Psoas muscle (tissue), 8 donors: ENCODE measurements at regions of chr6 and their contacts with region 1.

Region 1: DNA sequence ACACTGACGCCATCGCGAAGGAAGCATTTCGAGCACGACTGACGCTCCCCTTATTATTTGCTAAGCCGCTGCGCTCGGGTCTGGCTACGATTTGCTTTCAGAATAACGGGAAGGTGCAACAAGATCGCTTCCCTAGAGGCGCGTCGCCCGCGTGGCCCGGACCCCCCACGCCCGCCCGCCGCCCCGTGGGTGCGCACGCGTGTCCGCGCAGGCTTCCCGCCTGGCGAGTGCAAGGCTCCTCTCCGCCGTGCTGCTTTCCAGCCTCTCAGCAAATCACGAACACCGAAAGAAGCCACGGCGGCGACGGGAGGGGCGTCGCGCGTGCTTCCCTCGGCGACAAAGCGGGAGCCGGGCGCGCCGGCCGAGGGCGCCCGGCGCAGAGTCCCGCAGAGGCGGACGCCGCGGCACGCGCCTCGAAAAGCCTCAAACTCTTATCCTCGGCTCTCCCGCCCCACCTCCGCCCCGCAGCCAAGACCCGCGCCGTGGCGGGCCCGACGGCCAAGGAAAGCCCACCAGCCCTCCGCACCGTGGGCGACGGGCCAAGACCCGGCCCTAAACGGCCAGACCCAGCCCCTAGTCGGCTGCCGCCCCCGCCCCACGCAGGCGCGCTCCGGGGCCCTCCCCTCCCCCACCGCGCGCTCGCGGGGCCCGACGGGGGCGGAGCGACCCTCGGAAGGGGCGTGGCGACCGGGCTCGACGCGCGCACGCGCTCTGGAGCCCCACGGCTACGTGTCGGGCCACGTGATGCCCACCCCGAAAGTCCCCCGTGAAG is 987 bp upstream of the QKI start:
- DNase-seq: peak; percentile 90 to 95
- ATAC-seq: peak; percentile 85 to 92 (median 89)
- H3K4me3 ChIP-seq: peak overlapping the region; percentile 73
- H3K27ac ChIP-seq: peak overlapping the region; percentile 98
- H3K4me1 ChIP-seq: peaks cover 1% of the 10 kb centered on the region
- H3K27me3 ChIP-seq: no peaks in the 10 kb centered on the region
- CTCF ChIP-seq: no peak

Region 2: GRCh38 chr6:162856885-162857284 is 556.6 kb before region 1 on chr6:
- intact Hi-C with region 1: loop called in 1 of 2 experiments (anchors 5 kb)
- DNase-seq: no peak
- ATAC-seq: peak; percentile 80 to 95 (median 92)
- H3K4me3 ChIP-seq: peak overlapping the region; percentile 61
- H3K27ac ChIP-seq: peak overlapping the region; percentile 72
- H3K4me1 ChIP-seq: no peaks in the 10 kb centered on the region
- H3K27me3 ChIP-seq: no peaks in the 10 kb centered on the region
- CTCF ChIP-seq: peak; percentile 52

Region 3: GRCh38 chr6:162899148-162899547 is 514.4 kb before region 1 on chr6:
- intact Hi-C with region 1: no loop called
- DNase-seq: no peak
- ATAC-seq: peak; percentile 59 to 86 (median 68)
- H3K4me3 ChIP-seq: no peak overlapping the region
- H3K27ac ChIP-seq: no peak overlapping the region
- H3K4me1 ChIP-seq: no peaks in the 10 kb centered on the region
- H3K27me3 ChIP-seq: peaks cover 0 to under 1% (median 0%) of the 10 kb centered on the region in 3 donors
- CTCF ChIP-seq: no peak

Region 4: DNA sequence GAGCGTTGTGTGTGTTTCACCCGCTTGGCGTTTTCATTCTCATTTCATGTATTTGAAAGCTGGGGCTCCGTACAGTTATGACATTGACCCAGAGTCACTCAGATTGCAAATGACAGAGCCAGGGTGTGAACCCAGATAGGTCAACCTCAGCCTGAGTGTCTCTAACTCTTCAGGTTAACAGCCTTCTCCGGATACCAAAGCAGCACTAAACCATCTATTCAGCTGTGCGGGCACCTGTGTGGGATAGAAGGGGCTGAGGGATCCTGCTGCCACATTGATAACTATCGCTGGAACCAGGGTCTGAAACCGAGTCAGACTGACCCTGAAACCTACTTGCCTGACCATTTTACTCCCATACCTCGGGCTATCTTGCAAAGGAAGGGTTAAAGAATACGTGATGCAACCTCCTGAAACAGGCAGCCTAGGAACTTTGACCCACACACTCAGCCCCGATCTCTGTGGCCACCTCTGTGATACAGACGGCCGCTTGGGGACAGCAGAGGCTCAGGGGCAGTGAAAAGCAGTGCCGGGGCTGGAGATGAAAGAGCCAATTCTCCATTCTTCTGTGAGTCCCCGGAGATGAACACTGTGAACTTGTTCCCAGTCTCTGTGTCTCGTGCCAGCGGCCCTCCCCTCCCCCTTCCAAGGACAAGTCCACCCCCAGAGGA is 232.5 kb before region 1 on chr6:
- intact Hi-C with region 1: loop called (anchors 2 to 5 kb)
- DNase-seq: peak; percentile 75 to 90
- ATAC-seq: peak; percentile 93 to 96 (median 94)
- H3K4me3 ChIP-seq: peak overlapping the region; percentile 54
- H3K27ac ChIP-seq: peak overlapping the region; percentile 48
- H3K4me1 ChIP-seq: peaks cover 27% of the 10 kb centered on the region
- H3K27me3 ChIP-seq: no peaks in the 10 kb centered on the region
- CTCF ChIP-seq: peak; percentile 89

Region 5: GRCh38 chr6:163191704-163192537 is 221.6 kb before region 1 on chr6:
- intact Hi-C with region 1: no loop called
- DNase-seq: no peak
- ATAC-seq: peak; percentile 26 to 57 (median 40)
- H3K4me3 ChIP-seq: no peak overlapping the region
- H3K27ac ChIP-seq: no peak overlapping the region
- H3K4me1 ChIP-seq: peaks cover 6% of the 10 kb centered on the region
- H3K27me3 ChIP-seq: no peaks in the 10 kb centered on the region
- CTCF ChIP-seq: no peak

Region 6: DNA sequence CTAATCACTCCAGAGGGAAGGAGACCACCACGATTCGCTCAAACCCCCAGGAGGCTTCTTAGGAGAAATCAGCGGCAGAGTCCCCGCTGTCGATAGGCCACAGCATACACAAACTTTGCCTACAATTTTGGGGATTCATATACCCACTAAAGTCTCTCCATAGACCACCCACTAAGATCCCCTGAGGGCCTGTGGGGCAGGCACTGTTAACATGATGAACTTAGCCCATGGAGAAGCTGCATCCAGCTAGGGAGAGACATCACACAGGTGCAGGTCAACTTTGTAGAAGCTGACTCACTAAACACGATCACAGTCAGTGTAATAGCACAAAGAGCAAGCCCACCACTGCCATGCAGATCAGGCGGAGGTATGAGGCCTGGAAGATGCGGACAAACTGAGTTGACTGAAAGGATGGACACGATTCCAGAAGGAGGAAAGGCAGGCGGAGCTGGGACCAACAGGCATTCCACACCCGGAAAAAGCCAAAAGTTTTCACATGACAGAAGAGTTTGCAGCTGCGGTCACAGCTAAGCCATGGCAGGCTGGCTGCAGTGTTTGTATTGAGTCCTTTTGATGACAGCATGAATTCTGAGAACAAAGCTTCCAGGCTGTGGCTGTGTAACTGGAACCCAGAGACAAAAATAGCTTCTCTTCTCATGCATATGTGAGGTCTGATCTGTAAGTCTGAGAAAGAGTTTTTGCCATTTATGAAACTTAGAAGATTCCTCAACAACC is 74.7 kb before region 1 on chr6:
- intact Hi-C with region 1: loop called (anchors 2 to 5 kb)
- DNase-seq: peak; percentile 56 to 78
- ATAC-seq: peak; percentile 79 to 83 (median 80)
- H3K4me3 ChIP-seq: peak overlapping the region; percentile 50
- H3K27ac ChIP-seq: peak overlapping the region; percentile 94
- H3K4me1 ChIP-seq: peaks cover 72% of the 10 kb centered on the region
- H3K27me3 ChIP-seq: no peaks in the 10 kb centered on the region
- CTCF ChIP-seq: no peak

Region 7: GRCh38 chr6:163460307-163460782 is 46.8 kb after region 1 on chr6:
- intact Hi-C with region 1: no loop called
- DNase-seq: no peak
- ATAC-seq: peak in 1 of 4 donors; percentile 6
- H3K4me3 ChIP-seq: peak overlapping the region; percentile 62
- H3K27ac ChIP-seq: peak overlapping the region; percentile 73
- H3K4me1 ChIP-seq: peaks cover 82% of the 10 kb centered on the region
- H3K27me3 ChIP-seq: no peaks in the 10 kb centered on the region
- CTCF ChIP-seq: no peak

Region 8: DNA sequence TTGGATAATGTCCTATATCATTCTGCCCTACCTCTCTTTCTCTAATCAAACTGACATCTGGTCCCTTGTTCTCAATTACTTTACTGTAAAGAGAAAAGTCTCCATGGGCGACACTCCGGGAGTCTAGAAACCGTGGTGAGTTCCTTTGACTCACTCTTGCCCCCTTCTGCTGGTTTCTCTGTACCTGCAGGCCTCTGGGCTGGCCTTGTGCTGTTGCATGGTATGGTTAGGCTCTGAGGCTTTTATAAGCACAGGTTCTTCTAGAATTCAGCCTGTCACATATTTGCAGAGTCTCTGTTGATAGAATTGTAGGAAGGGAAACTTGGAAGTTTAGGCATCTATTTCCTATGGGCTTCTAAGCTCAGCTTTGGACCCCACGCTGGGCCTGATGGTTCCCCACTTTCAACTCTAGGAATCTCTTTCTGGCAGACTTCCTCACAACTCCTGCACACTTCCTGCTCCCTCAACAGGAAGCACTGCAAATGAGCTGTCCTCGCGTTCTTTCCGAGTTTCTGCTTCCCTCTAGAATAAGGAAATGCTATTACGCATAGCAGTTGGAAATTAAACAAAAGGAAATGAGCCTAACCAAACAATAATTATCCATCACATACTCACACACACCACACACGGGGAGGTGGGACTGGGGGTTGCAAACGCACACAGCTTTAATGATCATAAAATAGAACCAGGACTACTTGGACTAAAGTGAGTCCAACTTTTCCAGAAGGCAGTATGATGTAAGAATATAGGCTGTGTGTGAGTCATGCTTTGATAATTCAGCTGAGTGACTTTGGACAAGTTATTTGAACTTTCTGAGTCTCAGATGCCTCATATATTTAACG is 684.2 kb after region 1 on chr6:
- intact Hi-C with region 1: loop called in 1 of 2 experiments (anchors 5 kb)
- DNase-seq: peak in 1 of 2 donors; percentile 50
- ATAC-seq: peak; percentile 61 to 74 (median 64)
- H3K4me3 ChIP-seq: no peak overlapping the region
- H3K27ac ChIP-seq: peak overlapping the region; percentile 77
- H3K4me1 ChIP-seq: peaks cover 28% of the 10 kb centered on the region
- H3K27me3 ChIP-seq: no peaks in the 10 kb centered on the region
- CTCF ChIP-seq: peak; percentile 33